Psoas muscle (tissue), 8 donors: ENCODE measurements at regions of chr1 and their contacts with region 1.

Region 1: GRCh38 chr1:78114034-78114956 is 68.5 kb downstream of the GIPC2 start:
- DNase-seq: peak; percentile 23 to 75
- ATAC-seq: peak; percentile 87 to 96 (median 88)
- H3K4me3 ChIP-seq: peak overlapping the region; percentile 6
- H3K27ac ChIP-seq: peak overlapping the region; percentile 67
- H3K4me1 ChIP-seq: no peaks in the 10 kb centered on the region
- H3K27me3 ChIP-seq: no peaks in the 10 kb centered on the region
- CTCF ChIP-seq: peak; percentile 87

Region 2: GRCh38 chr1:77825131-77825709 is 289.1 kb before region 1 on chr1:
- intact Hi-C with region 1: loop called (anchors 5 to 10 kb)
- DNase-seq: no peak
- ATAC-seq: peak; percentile 86 to 93 (median 90)
- H3K4me3 ChIP-seq: no peak overlapping the region
- H3K27ac ChIP-seq: peak overlapping the region; percentile 98
- H3K4me1 ChIP-seq: peaks cover 28% of the 10 kb centered on the region
- H3K27me3 ChIP-seq: no peaks in the 10 kb centered on the region
- CTCF ChIP-seq: peak; percentile 33

Region 3: GRCh38 chr1:77888081-77888780 is 226.1 kb before region 1 on chr1 and contains the start of gene NEXN:
- intact Hi-C with region 1: no loop called
- DNase-seq: peak; percentile 89 to 95
- ATAC-seq: peak; percentile 81 to 89 (median 84)
- H3K4me3 ChIP-seq: peak within 1 kb of the TSS; percentile 88
- H3K27ac ChIP-seq: peak within 1 kb of the TSS; percentile 100
- H3K4me1 ChIP-seq: peaks cover 26% of the 10 kb centered on the region
- H3K27me3 ChIP-seq: no peaks in the 10 kb centered on the region
- CTCF ChIP-seq: no peak
- total RNA-seq, gene NEXN: 161 to 541 (median 362) TPM

Region 4: DNA sequence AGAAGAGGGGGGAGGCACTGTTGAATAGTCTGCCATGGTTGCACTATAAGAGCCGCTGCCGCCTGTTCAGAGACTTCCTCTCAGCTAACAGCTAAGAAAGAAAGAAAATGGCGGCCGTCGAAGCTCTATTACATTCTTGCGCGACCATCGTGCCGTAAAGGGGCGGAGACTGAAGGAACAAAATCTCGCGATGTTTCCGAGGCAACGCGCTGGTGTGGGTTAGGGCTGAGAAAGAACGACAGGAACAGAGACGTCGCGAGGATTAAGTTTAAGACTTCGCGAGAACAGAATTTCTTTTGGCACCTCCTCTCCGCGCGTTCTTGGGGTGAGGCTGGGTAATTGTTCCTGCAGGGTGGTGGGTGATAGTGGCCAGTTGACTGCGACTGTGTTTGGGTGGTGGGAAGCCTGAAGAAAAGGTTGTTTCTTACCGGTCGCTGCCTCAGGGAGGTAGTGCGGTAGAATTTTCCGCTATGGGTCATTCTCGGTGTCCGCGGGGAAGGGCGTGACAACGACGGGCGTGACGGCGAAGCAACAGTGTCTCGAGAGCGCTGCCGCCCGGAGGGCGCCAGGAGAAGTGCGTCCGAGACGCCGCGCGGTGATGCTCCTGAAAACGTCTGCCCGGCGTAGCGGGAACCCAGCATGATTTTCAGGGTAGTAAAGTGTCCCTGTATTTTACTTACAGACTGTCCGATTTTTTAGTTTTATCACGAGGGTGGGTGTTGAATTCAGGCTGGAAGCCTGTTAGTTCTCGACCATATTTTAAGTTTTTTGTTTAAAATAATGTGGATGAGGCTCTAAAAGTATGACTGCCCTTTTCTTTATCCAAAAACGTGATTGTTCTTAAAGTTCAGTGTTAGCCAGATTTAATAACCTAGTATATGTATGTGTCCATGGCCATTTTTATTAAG is 135.1 kb before region 1 on chr1 and contains the start of gene FUBP1:
- intact Hi-C with region 1: loop called (anchors 2 to 5 kb)
- DNase-seq: peak; percentile 92 to 95
- ATAC-seq: peak; percentile 90 to 93 (median 92)
- H3K4me3 ChIP-seq: peak within 1 kb of the TSS; percentile 83
- H3K27ac ChIP-seq: peak within 1 kb of the TSS; percentile 96
- H3K4me1 ChIP-seq: peaks cover 47% of the 10 kb centered on the region
- H3K27me3 ChIP-seq: no peaks in the 10 kb centered on the region
- CTCF ChIP-seq: peak; percentile 76
- total RNA-seq, gene FUBP1: 48.8 to 72.1 (median 63.7) TPM

Region 5: DNA sequence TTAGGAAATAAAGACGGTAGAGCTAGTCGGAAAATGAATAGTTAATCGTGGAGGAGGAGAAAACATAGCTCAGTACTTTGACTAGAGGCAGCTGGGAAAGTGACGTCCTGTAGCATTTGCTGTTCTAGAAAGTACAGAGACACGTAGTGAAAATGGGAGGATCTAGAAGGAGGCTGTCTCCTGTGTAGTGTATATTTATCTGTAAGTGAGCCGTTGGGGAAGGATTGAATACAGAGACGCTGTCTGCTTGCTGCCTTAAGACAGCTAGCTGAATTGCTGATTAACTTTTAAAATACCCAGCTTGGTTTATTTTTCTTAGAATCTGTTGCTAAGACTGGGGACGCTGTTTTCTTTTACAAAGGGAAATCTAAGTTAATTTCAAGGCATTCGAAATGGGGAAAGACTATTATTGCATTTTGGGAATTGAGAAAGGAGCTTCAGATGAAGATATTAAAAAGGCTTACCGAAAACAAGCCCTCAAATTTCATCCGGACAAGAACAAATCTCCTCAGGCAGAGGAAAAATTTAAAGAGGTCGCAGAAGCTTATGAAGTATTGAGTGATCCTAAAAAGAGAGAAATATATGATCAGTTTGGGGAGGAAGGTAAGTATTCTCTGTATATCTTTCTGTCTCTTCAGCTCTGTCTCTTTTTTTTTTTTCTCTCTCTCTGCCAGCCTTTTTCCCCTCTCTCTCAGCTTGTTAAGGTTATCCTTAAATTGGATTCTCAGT is 109.4 kb before region 1 on chr1 and contains the start of gene DNAJB4:
- intact Hi-C with region 1: loop called (anchors 5 to 10 kb)
- DNase-seq: no peak
- ATAC-seq: peak; percentile 96 to 99 (median 98)
- H3K4me3 ChIP-seq: peak within 1 kb of the TSS; percentile 69
- H3K27ac ChIP-seq: peak within 1 kb of the TSS; percentile 95
- H3K4me1 ChIP-seq: peaks cover 31% of the 10 kb centered on the region
- H3K27me3 ChIP-seq: no peaks in the 10 kb centered on the region
- CTCF ChIP-seq: no peak
- total RNA-seq, gene DNAJB4: 98.8 to 209 (median 146) TPM

Region 6: DNA sequence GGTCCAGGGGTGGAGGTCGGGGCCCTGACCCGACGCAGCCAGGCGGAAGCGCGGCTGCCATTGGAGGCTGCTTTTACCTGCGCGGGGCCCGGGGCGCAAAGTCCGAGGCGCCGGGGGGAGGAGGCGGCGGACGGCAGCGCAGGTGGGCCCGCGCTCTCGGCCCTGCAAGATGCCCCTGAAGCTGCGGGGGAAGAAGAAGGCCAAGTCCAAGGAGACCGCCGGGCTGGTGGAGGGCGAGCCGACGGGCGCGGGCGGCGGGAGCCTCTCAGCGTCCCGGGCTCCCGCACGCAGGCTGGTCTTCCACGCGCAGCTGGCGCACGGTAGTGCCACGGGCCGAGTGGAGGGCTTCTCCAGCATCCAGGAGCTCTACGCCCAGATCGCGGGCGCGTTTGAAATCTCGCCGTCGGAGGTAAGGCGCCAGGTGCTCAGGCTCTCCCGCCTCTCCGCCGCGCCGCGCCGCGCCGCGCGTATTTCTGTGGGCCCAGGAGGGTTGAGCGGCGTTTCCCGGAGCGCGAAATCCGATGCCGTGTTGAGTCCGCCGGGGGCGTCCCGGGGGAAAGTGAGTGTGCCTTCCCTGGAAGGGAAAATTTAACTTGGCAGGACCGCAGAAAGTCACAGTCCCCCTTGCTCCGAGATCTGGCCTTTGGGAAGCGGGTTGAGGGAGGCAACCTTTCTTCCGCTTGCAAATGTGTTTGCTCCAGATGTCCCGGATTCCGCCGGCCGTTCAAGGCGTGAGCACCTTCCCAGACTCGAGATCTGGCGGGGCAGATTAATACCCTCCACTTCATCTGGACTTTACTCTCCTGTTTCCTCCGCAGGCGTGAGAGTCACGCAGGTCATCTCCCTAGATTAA is 68.1 kb before region 1 on chr1 and contains the start of gene GIPC2:
- intact Hi-C with region 1: loop called in 1 of 2 experiments (anchors 5 kb)
- DNase-seq: peak; percentile 49 to 73
- ATAC-seq: peak; percentile 78 to 86 (median 82)
- H3K4me3 ChIP-seq: peak within 1 kb of the TSS; percentile 79
- H3K27ac ChIP-seq: peak within 1 kb of the TSS; percentile 77
- H3K4me1 ChIP-seq: peaks cover 22% of the 10 kb centered on the region
- H3K27me3 ChIP-seq: no peaks in the 10 kb centered on the region
- CTCF ChIP-seq: no peak
- total RNA-seq, gene GIPC2: 1.2 to 1.6 (median 1.4) TPM

Region 7: DNA sequence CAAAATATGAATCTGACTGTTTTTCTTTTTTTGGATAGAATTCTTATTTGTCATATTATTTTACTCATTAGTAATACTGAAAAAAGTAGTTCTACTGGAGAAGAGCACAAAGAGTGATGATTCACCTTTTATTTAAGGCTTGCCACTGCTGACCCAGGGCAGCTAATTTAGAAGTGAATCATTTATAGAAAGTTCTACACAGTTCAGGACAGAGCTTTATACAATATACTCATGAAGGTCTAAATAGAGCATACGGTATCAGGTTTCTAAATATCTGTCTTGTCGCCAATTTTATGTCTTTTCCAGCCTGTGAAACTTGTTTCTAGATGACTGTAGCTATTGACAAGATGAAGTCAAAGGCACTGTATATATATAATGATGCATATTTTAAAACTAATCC is 43.5 kb before region 1 on chr1:
- intact Hi-C with region 1: loop called in 1 of 2 experiments (anchors 5 kb)
- DNase-seq: no peak
- ATAC-seq: peak; percentile 93 to 97 (median 94)
- H3K4me3 ChIP-seq: no peak overlapping the region
- H3K27ac ChIP-seq: peak overlapping the region; percentile 69
- H3K4me1 ChIP-seq: peaks cover 38% of the 10 kb centered on the region
- H3K27me3 ChIP-seq: no peaks in the 10 kb centered on the region
- CTCF ChIP-seq: no peak

Region 8: DNA sequence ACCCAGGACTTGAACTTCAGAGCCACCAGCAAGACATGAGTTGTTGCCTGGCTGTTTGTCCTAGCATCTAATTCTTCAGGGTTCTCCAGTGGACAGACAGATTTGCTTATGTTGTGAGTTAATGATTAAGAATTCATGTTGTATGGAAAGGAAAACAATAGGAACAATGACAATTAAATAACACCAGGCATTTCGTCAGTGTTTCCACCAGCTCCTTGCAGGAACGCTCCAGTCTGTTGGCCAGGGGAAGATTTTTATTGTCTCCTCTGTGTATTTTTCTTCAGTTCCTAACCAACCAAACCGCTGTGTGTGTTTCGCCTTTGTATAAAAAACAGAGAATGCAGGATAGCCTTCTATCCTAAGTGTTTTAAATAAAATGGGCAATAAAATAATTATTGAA is 312.1 kb after region 1 on chr1:
- intact Hi-C with region 1: no loop called
- DNase-seq: no peak
- ATAC-seq: no peak
- H3K4me3 ChIP-seq: no peak overlapping the region
- H3K27ac ChIP-seq: no peak overlapping the region
- H3K4me1 ChIP-seq: no peaks in the 10 kb centered on the region
- H3K27me3 ChIP-seq: no peaks in the 10 kb centered on the region
- CTCF ChIP-seq: no peak